Panc1 (cell line): ENCODE measurements at regions of chr9 and their contacts with region 1.

Region 1: GRCh38 chr9:7520396-7520795 is 279.2 kb downstream of the DMAC1 start:
- DNase-seq: no peak
- ATAC-seq: no peak
- H3K4me3 ChIP-seq: no peak overlapping the region
- H3K27ac ChIP-seq: no peak overlapping the region
- H3K4me1 ChIP-seq: no peaks in the 10 kb centered on the region
- H3K27me3 ChIP-seq: no peaks in the 10 kb centered on the region
- CTCF ChIP-seq: no peak

Region 2: DNA sequence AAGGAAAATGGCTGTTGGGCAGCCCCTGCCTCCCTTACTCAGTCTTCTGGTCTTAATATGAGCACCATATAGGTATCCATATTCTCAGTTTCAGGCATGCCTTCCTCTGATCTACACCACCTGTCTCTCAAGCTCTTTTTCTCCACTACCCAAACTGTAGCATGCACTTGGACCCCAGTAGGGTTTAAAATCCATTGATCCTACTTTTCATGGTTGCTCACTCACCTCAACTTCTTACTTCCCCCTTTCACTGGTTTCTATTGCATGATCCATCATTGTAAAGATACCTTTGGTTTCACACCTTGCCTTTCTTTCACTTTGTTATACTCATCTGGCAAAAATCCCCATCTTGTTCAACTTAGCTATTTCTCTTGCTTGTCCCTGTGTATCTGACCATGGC is 603.2 kb before region 1 on chr9:
- CTCF ChIA-PET with region 1: no interaction called
- POLR2A ChIA-PET with region 1: no interaction called
- in situ Hi-C with region 1: no loop called
- intact Hi-C with region 1: no loop called
- DNase-seq: no peak
- ATAC-seq: no peak
- H3K4me3 ChIP-seq: no peak overlapping the region
- H3K27ac ChIP-seq: no peak overlapping the region
- H3K4me1 ChIP-seq: no peaks in the 10 kb centered on the region
- H3K27me3 ChIP-seq: no peaks in the 10 kb centered on the region
- CTCF ChIP-seq: no peak

Region 3: DNA sequence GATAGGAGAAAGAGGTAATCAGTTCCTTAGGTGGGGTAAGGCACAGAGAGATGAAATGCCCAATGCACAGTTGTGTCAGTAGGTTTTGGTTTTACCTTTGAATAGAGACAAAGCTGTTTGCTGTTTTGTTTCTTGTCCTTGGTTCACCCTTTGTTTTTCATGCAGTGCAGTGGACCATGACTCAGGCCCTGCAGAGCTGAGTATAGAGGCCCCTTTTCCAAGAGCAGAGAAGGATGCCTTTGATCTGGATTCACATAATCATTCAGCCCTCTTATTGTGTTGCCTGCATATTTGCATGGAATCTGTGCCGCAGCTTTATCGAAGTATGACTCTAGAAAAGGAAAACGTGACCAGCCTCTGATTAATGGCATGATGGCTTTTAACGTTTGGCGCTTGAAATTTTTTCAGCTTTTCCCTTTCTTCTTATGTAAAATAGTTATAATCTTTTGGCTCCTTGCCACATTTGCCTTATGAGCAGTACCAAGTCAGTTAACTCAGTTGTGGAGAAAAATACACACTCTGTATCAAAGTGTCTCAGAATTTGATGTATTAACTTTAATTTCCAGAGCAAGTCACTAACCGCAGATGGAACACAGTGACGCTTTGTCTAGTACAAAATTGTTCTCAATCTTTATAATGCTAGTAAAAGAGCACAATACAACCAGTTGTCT is 565.0 kb before region 1 on chr9:
- CTCF ChIA-PET with region 1: no interaction called
- POLR2A ChIA-PET with region 1: interaction called, 11 read pairs
- in situ Hi-C with region 1: no loop called
- intact Hi-C with region 1: no loop called
- DNase-seq: no peak
- ATAC-seq: no peak
- H3K4me3 ChIP-seq: no peak overlapping the region
- H3K27ac ChIP-seq: no peak overlapping the region
- H3K4me1 ChIP-seq: no peaks in the 10 kb centered on the region
- H3K27me3 ChIP-seq: no peaks in the 10 kb centered on the region
- CTCF ChIP-seq: no peak

Region 4: DNA sequence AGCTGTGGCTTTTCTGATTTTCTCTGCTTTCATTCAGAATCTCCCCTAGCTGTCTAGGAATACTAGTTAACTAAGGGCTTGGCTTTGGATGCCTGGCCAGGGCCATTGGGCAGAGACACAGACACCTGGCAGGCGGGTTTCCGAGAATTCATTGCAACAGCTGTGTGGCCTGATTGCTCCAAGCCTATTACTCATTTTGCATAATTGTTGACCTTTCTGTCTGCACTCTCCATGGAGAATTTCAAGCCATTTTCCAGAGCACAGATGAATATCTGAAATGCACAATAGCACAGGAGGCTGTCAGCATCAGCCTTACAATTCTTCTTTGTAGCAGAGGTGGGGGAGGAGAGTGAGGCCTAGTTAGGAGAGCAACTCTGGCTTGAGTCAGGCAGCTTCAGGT is 31.4 kb before region 1 on chr9:
- CTCF ChIA-PET with region 1: no interaction called
- POLR2A ChIA-PET with region 1: no interaction called
- in situ Hi-C with region 1: no loop called
- intact Hi-C with region 1: no loop called
- DNase-seq: no peak
- ATAC-seq: no peak
- H3K4me3 ChIP-seq: no peak overlapping the region
- H3K27ac ChIP-seq: no peak overlapping the region
- H3K4me1 ChIP-seq: no peaks in the 10 kb centered on the region
- H3K27me3 ChIP-seq: no peaks in the 10 kb centered on the region
- CTCF ChIP-seq: no peak